OCI-LY7 (cell line): ENCODE measurements at regions of chr19 and their contacts with region 1.

Region 1: DNA sequence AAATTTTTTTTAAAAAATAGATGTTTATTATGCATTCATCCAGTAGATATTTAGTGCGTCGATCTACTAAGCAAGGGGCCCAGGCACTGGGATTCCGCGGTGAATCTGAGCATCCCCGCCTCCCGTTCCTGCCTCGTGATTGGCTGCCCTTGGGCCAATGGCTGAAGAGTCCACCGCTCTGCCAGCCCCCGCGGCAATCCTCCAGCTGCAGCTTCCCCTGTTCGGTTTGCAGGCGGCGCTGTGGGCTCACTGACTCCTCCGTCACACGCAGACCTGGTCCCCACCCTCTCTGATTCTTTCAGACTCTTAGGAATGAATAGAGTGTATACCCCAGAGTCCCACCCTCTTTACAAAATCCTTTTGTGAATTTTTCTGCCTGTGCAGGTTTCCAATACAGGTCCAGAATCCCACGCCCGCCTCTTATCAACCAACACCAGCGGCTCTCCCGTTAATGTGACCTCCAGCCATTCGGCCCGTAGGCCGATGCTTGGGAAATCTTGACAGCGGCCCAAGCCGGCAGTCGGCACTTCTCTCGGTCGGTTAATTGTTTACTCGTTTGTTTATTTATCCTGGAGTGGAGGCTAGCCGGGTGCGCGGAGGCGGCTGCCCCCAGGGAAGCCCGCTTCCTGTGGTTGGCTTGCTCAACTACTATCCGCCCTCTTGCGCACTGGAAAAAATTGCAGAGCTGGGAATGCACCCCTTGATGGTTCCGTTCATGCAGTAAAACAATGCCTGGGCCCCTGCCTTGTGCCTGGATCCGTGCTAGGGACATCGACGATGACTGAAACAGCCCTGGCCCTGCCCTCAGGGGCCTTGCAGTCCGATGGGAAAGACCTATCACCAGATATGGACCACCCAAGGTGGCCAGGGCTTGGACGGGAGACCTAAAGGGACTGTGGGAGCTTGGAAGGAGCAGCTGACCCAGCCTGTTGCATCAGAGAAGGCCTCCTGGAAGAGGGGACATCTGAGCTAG is 4.5 kb upstream of the ARHGAP35 start:
- DNase-seq: peak; percentile 93
- H3K4me3 ChIP-seq: peak overlapping the region; percentile 28
- H3K27ac ChIP-seq: peak overlapping the region; percentile 14
- H3K4me1 ChIP-seq: peaks cover 22% of the 10 kb centered on the region
- CTCF ChIP-seq: peak; percentile 85

Region 2: GRCh38 chr19:45918721-45919120 is 937.6 kb before region 1 on chr19:
- CTCF ChIA-PET with region 1: no interaction called
- POLR2A ChIA-PET with region 1: interaction called, 10 read pairs
- intact Hi-C with region 1: no loop called
- DNase-seq: no peak
- H3K4me3 ChIP-seq: no peak overlapping the region
- H3K27ac ChIP-seq: no peak overlapping the region
- H3K4me1 ChIP-seq: no peaks in the 10 kb centered on the region
- CTCF ChIP-seq: no peak

Region 3: DNA sequence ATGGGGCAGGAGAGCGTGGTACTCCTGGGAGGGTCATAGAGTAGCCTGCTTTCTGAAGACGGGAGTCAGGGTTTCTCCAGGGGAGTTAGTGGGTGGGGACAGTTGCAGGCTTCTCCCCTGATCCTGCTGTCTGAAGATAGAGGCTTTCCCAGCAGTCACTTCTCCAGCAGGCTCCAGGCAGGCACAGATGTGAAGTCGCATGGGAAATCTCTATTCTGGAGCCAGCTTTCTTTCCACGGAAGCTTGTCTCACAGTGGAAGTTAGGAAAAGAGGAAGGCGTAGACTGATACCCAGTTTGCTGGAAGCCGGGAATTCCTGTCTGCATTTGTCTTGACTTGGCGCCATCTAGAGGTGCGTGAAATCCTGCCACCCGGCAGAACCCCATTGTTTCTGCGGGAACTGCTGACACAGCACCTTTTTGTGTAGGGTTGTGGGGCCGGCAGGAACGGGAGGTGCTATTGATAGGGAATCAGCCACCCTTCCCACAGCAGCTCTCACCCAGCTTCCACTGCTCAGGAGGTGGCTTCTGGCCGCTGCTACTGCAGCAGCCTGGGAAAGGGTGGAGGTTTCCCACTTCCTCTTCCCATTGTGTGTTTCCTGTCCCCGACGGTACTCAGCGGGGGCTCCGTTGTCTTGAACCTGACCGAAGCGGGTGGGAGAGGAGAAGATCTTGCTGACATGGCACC is 134.8 kb after region 1 on chr19:
- CTCF ChIA-PET with region 1: no interaction called
- POLR2A ChIA-PET with region 1: no interaction called
- intact Hi-C with region 1: loop called (anchors 1 kb)
- DNase-seq: peak; percentile 68
- H3K4me3 ChIP-seq: no peak overlapping the region
- H3K27ac ChIP-seq: no peak overlapping the region
- H3K4me1 ChIP-seq: peaks cover 14% of the 10 kb centered on the region
- CTCF ChIP-seq: peak; percentile 95